ENCODE measurements at regions of chr6 and their contacts with region 1.

Region 1: GRCh38 chr6:16964553-16965501 is 137.0 kb upstream of the STMND1 start:
- DNase-seq: peak; percentile 87
- H3K4me3 ChIP-seq: peak overlapping the region in 1 of 4 donors; percentile 14
- H3K27ac ChIP-seq: no peak overlapping the region
- H3K4me1 ChIP-seq: peaks cover 0 to 10% (median 4%) of the 10 kb centered on the region in 4 donors
- H3K27me3 ChIP-seq: no peaks in the 10 kb centered on the region
- CTCF ChIP-seq: peak; percentile 67 to 89 (median 82)
- EP300 ChIP-seq: no peak
- POLR2A ChIP-seq: peak in 1 of 2 donors; percentile 12

Region 2: GRCh38 chr6:16503970-16504415 is 460.8 kb before region 1 on chr6:
- intact Hi-C with region 1: loop called (anchors 10 kb)
- DNase-seq: no peak
- H3K4me3 ChIP-seq: no peak overlapping the region
- H3K27ac ChIP-seq: peak overlapping the region in 1 of 4 donors; percentile 73
- H3K4me1 ChIP-seq: peaks cover 0 to 27% (median 25%) of the 10 kb centered on the region in 4 donors
- H3K27me3 ChIP-seq: no peaks in the 10 kb centered on the region
- CTCF ChIP-seq: no peak
- EP300 ChIP-seq: no peak
- POLR2A ChIP-seq: no peak

Region 3: DNA sequence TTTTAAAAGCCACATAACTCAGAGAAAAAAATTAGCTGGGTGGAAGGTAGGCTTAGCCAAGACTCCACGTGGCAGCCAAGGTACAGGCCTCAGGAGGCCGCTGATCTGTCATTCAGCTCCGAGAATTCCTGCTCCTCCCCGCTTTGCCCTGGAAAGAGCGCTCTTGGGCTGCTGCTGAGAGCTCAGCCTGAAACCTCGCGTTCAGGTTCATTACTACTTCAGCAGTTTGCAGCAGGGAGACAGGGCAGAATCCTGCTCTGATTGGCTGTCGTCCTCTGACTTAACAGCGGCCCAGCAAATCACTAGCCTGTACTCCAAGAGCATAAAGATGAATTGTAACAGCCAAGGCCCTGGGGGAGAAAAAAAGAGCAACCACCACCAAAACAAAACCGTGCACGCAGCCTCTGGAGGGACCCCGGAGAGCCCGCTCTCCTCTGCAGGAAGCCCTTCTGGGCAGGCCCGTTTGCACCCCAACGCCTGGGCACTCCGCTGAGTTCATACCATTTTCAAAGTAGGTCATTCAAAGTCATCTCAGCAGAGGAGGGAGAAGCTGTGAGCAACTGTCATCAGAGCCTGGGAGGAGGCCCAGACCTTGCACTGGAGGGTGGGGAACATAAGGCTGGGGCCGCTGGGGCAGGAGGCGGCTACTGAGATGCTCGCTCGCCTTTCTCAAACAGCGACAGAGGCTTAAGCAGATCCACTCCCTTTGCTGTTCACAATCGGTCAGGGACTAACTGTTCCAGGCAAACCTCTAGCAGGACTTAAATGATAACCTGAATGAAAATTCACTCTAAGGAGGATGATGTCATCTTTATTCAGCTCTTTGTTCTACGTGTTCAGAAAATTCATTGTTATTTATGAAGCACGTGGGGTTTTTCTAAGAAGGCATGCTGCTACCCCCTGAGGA is 161.3 kb before region 1 on chr6:
- intact Hi-C with region 1: loop called (anchors 10 kb)
- DNase-seq: peak; percentile 82
- H3K4me3 ChIP-seq: peak overlapping the region; percentile 7 to 46 (median 36)
- H3K27ac ChIP-seq: peak overlapping the region; percentile 67 to 87 (median 74)
- H3K4me1 ChIP-seq: peaks cover 0 to 36% (median 26%) of the 10 kb centered on the region in 4 donors
- H3K27me3 ChIP-seq: no peaks in the 10 kb centered on the region
- CTCF ChIP-seq: no peak
- EP300 ChIP-seq: no peak
- POLR2A ChIP-seq: no peak